ENCODE measurements at regions of chr2 and their contacts with region 1.

Region 1: DNA sequence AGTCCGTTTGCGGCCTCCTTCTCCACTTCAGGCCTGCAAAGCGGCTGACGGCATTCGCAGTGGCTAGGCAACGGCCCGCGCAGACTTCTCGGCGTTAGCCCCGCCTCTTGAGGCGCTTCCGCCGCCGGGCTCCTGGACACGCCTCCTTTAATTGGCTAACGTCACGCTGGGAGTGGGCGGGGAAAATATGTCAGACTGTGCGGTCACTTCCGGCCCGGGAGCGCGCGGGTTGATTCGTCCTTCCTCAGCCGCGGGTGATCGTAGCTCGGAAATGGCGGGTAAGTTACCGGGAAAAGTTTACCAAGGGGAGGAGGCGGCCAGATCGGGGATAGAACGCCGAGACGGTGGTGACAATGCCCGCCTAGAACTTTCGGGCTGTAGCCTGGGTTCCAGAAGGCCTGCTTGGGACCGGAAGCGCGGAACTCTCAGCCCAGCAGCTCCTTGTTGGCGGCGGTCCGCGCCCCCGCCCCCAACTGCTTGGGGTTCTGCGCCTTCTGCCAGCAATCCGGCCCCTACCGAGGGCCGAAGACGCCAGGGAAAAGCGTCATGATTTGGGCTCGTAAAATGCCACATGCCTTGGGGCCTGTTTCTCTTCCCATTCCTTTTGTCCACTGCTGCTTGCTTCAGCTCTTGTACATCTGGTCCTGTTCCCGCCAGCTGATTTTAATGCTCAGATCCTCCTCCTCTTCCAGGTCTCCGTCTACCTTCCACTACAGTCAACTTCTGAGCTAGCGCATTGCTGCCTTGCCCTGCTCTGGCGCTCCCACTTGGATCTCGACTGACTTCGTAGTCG is at the start of gene HAT1:
- DNase-seq: peak; percentile 96 to 98 (median 96)
- H3K4me3 ChIP-seq: peak within 1 kb of the TSS; percentile 87
- H3K4me3 Mint-ChIP-seq: peak within 1 kb of the TSS; percentile 89 to 99 (median 95)
- H3K27ac ChIP-seq: peak within 1 kb of the TSS; percentile 96
- H3K27ac Mint-ChIP-seq: peak within 1 kb of the TSS; percentile 95 to 100 (median 100)
- H3K4me1 ChIP-seq: peaks cover 30% of the 10 kb centered on the region
- H3K4me1 Mint-ChIP-seq: peaks cover 34 to 50% (median 48%) of the 10 kb centered on the region in 3 donors
- H3K27me3 ChIP-seq: no peaks in the 10 kb centered on the region
- H3K27me3 Mint-ChIP-seq: no peaks in the 10 kb centered on the region
- total RNA-seq, gene HAT1: 85.1 to 88.7 TPM

Region 2: DNA sequence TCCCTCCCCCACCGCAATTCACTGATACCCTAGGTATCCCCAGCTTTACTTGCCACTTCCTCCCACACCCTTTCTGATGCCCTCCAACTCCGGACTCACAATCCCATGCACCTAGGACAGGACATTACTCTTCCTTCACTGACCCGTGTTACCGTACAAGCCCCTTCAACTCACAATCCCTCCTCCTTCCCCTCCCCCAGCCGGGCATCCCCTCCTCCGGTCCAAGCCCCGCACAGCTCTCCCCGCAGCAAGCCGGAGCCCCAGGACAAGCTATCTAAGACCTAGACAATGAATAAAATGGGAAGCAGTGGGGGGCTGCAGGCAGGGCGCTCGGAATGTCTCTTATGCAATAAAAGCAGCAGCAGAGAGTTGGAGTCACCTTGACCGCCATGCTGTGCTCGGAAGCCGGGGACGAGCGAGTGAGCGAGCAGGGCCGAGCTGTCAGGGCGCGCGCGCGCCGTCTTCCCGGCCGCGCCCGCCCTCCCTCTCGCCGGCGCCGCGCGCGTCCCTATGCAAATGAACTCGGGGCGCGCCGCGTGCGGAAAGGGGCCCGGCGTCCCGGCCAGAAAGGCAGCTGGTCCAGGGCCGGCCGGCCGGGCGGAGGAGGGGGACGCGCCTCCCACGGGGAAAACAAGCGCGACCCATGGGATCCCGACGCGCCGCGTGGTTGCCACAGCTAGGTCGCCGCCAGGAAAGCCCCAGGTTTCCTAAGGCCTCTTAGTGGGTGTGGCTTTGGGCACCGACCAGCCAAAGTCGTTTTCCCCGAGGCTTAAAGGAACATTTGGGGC is 28.4 kb before region 1 on chr2 and contains the start of gene SLC25A12:
- CTCF ChIA-PET with region 1: interaction called, 3 read pairs
- POLR2A ChIA-PET with region 1: interaction called, 13 read pairs
- DNase-seq: peak; percentile 51 to 73 (median 62)
- H3K4me3 ChIP-seq: peak within 1 kb of the TSS; percentile 97
- H3K4me3 Mint-ChIP-seq: peak within 1 kb of the TSS; percentile 94 to 99 (median 97)
- H3K27ac ChIP-seq: peak within 1 kb of the TSS; percentile 62
- H3K27ac Mint-ChIP-seq: peak within 1 kb of the TSS; percentile 25 to 97 (median 90)
- H3K4me1 ChIP-seq: peaks cover 17% of the 10 kb centered on the region
- H3K4me1 Mint-ChIP-seq: peaks cover 40 to 54% (median 50%) of the 10 kb centered on the region in 3 donors
- H3K27me3 ChIP-seq: no peaks in the 10 kb centered on the region
- H3K27me3 Mint-ChIP-seq: peaks cover 6 to 8% of the 10 kb centered on the region in 2 donors
- total RNA-seq, gene SLC25A12: 22.2 to 22.9 TPM